Activated CD4-positive, alpha-beta memory T cell treated with anti-CD3 and anti-CD28 coated beads for 36 hours (primary cell): ENCODE measurements at regions of chr2 and their contacts with region 1.

Region 1: GRCh38 chr2:58046585-58047372 is at the start of gene VRK2:
- DNase-seq: peak; percentile 90
- H3K4me3 Mint-ChIP-seq: peak within 1 kb of the TSS; percentile 87
- H3K27ac Mint-ChIP-seq: peak within 1 kb of the TSS; percentile 95
- H3K4me1 Mint-ChIP-seq: peaks cover 44% of the 10 kb centered on the region
- H3K27me3 Mint-ChIP-seq: no peaks in the 10 kb centered on the region
- total RNA-seq, gene VRK2: 23.3 to 26.3 TPM

Region 2: DNA sequence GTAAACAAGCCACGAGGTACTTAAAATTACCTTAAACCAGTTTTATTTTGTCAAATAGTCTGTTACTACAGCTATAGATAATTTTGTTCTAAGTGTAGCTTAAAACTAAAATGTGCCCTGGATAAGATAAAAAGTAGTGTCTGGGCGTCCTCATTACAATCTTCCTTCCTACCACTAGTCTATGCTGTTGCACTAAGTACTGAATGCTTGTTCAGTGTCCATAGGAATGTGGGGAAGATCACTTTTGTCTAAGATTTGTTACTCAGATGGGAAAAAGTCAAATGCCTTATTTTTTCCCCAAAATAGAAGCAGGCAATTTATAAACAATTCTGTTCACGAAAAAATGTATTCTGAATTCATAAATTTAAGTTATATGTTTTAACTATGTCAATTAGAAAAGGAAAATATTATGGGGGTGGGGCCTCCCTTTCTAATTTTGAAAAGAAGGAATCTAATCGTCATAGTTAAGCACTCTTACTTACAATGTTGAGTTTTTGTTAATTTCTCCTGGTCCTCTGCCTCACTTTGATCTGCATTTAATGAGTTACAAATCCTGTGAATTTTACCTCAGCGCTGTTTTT is 140.5 kb before region 1 on chr2:
- CTCF ChIA-PET with region 1: no interaction called
- POLR2A ChIA-PET with region 1: no interaction called
- intact Hi-C with region 1: loop called (anchors 2 kb)
- DNase-seq: no peak
- H3K4me3 Mint-ChIP-seq: no peak overlapping the region
- H3K27ac Mint-ChIP-seq: no peak overlapping the region
- H3K4me1 Mint-ChIP-seq: peaks cover 22% of the 10 kb centered on the region
- H3K27me3 Mint-ChIP-seq: no peaks in the 10 kb centered on the region

Region 3: DNA sequence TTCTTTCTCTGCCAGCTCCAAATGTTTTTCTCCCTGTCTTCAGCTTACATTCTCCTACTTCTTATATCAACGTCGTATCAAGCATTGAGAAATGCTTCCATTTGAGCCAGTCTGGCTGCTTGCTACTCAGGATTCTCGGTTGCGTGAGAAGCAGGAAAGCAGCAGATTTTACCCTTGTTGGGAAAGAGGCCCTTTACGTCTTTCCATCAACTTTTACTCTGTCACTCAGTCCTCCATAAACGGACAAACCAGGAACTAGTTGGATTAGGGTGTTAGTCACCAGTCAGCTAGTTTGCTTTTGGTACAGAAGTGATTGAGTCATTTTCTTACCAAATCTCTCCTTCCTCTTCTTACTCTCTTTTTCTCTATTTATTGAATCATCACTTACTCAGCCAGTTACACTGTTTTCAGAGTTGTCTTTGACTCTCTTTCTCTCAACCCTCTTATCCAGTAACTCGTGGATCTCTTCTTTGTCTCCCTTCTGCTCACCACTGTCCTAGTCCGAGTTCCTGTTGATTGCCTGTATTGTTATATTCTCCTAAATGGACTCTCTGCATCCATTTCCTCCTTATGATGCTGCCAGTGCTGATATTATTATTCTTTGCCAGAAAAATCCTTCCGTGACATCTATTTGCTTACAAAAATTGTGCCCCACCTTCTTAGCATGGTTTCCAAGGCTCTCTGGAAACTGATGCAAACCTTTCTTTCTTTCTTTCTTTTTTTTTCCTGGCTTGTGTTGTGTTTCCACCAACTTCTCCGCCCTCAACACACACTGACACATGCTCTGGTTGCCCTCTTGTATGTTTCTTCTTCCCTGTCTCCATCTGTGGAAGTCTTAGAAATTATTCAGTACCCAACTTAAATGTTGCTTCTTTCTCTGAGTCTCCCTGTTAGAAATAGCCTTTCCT is 61.3 kb after region 1 on chr2:
- CTCF ChIA-PET with region 1: no interaction called
- POLR2A ChIA-PET with region 1: interaction called, 4 read pairs
- intact Hi-C with region 1: loop called (anchors 1 kb)
- DNase-seq: no peak
- H3K4me3 Mint-ChIP-seq: no peak overlapping the region
- H3K27ac Mint-ChIP-seq: no peak overlapping the region
- H3K4me1 Mint-ChIP-seq: peaks cover 13% of the 10 kb centered on the region
- H3K27me3 Mint-ChIP-seq: no peaks in the 10 kb centered on the region

Region 4: DNA sequence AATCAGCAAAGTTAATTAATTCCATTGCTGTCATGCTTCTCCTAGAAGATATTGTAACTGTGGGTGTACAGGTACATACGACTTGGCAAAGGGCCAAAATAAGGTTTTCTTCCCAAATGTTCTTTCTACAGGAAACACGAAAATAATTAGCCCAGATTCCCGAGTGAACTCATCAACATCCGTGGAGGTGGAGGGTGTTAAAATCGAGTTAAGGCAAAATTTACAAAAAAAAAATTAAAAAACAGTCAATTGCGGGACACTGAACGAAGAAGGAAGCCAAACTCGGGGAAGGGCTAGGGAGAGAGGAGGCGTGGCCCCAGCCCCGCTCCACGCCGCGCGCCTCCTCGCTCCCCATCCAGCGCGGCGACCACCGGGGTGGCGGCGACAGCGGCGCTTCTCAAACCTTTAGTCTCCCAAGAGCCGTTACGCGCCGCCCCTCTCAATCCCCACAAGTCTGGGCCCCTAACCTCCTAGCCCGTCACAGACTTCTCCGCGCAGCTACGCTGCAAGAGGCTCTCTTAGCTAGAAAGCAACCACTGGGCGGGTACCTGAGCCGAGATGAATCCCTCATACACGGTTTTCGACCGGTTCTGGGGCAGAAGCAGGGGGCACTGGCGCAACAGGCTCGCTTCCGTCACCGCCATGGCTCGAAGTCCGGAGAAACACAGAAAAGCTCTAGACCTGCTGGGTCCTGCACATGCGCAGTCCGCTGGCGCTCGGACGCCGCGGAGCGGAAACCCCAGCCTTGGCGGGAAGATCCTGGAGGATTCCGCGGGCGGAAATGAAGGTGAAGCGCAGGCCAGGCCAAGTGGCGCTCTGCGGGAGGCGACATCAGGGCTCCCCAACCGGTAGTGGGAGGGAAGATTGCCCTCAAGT is 194.1 kb after region 1 on chr2 and contains the start of gene FANCL:
- CTCF ChIA-PET with region 1: no interaction called
- POLR2A ChIA-PET with region 1: no interaction called
- intact Hi-C with region 1: loop called (anchors 1 kb)
- DNase-seq: peak; percentile 85
- H3K4me3 Mint-ChIP-seq: peak within 1 kb of the TSS; percentile 92
- H3K27ac Mint-ChIP-seq: peak within 1 kb of the TSS; percentile 86
- H3K4me1 Mint-ChIP-seq: peaks cover 31% of the 10 kb centered on the region
- H3K27me3 Mint-ChIP-seq: peaks cover 3% of the 10 kb centered on the region
- total RNA-seq, gene FANCL: 24.2 to 27.9 TPM

Region 5: GRCh38 chr2:58350484-58350883 is 303.7 kb after region 1 on chr2:
- CTCF ChIA-PET with region 1: no interaction called
- POLR2A ChIA-PET with region 1: no interaction called
- intact Hi-C with region 1: loop called (anchors 5 kb)
- DNase-seq: no peak
- H3K4me3 Mint-ChIP-seq: no peak overlapping the region
- H3K27ac Mint-ChIP-seq: no peak overlapping the region
- H3K4me1 Mint-ChIP-seq: peaks cover 6% of the 10 kb centered on the region
- H3K27me3 Mint-ChIP-seq: peaks cover 33% of the 10 kb centered on the region